GM10248 (cell line): ENCODE measurements at regions of chr11 and their contacts with region 1.

Region 1: GRCh38 chr11:132312701-132313111 is 942.3 kb downstream of the NTM start:
- DNase-seq: peak; percentile 52
- CTCF ChIP-seq: peak; percentile 39

Region 2: DNA sequence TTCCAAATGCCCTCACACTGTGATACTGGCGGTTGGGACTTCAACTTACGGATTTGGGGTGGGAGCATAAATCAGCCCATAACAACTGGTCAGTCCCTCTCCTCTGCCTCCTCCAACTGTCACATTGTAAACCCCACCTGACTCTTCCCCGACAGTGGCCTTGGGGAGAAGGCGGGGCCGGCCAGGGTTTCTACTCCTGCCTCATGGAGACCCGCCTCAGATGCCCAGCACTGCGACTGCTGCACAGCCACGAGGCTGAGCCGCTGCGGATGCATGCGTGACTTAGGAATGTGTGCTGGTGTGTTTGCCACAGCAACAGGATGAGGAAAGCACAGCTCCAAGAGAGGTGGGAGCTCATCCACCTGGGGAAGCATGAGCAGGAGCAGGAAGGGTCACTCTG is 28.1 kb before region 1 on chr11:
- CTCF ChIA-PET with region 1: interaction called, 18 read pairs
- POLR2A ChIA-PET with region 1: no interaction called
- DNase-seq: no peak
- CTCF ChIP-seq: no peak

Region 3: DNA sequence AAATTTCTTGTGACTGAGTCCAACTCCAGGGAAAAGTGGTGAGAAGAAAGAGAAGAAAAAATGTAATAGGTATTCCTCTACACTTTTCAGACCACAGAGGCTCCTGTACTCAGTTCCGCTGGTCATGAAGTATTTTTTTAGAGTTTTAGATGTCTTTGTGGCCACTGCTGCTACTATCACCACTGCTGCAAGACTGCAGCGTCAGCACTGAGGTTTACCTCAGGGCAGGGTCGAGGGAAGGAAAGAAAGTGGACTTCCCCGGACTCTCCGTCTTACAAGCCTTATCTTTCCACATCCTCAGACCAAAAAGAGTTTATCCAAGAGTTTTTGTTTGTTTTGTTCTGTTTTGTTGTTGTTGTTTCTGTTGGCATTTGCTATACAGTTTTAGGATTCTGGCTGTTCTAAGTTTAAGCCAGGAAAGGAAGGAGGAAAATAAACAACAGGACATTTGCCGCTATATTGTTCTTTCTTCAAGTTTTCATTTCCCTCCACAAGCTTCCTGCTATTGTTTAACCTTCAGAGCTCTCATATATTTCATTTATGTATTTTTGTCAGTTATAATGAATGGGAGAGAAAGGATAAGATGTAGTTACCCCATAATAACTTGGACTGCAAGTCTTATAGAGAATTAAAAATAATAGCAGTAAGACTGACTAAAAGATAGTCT is 23.0 kb before region 1 on chr11:
- CTCF ChIA-PET with region 1: interaction called, 12 read pairs
- POLR2A ChIA-PET with region 1: no interaction called
- DNase-seq: no peak
- CTCF ChIP-seq: no peak

Region 4: GRCh38 chr11:132300283-132300682 is 12.4 kb before region 1 on chr11:
- CTCF ChIA-PET with region 1: interaction called, 57 read pairs
- POLR2A ChIA-PET with region 1: no interaction called
- DNase-seq: no peak
- CTCF ChIP-seq: peak; percentile 16

Region 5: GRCh38 chr11:132337819-132338416 is 25.2 kb after region 1 on chr11:
- CTCF ChIA-PET with region 1: interaction called, 14 read pairs
- POLR2A ChIA-PET with region 1: no interaction called
- DNase-seq: no peak
- CTCF ChIP-seq: no peak

Region 6: GRCh38 chr11:132347156-132348090 is 34.7 kb after region 1 on chr11:
- CTCF ChIA-PET with region 1: interaction called, 15 read pairs
- POLR2A ChIA-PET with region 1: no interaction called
- DNase-seq: no peak
- CTCF ChIP-seq: no peak